Naive thymus-derived CD4-positive, alpha-beta T cell (primary cell): ENCODE measurements at regions of chr3 and their contacts with region 1.

Region 1: DNA sequence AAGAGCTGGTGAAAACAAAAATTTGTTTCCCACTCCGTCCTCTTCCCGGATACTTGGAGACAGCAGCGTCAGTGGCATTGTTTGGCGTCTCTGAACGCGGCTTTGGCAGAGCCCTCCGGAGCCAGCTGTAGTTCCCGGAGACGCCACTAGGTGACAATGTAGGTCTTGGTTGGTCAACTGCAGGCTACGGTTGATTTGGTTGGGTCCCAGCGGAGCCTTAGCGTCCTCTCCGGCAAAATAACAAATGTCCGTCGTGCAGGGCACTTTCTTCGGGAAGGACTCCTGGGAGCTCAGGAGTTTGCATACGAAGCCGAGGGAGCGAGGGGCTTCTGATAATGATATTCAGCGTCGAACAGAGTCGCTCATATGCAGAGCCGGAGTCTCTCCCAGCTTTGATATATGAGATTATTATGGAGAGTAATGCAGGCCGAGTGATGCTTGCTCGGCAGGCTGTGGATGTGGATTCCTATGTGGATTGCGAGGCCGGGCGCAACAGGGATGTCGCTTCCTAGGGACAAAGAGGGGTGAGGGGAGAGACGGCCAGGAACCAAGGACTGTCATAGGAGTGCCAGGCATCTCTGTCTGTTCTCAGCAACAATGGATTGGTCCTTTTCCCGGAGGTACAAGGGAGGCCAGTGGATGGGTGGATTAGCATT is 74.8 kb downstream of the IL20RB start:
- DNase-seq: peak; percentile 19 to 79 (median 63)
- ATAC-seq: peak; percentile 87
- H3K4me3 ChIP-seq: peak overlapping the region; percentile 55
- H3K4me3 Mint-ChIP-seq: peak overlapping the region; percentile 48 to 80 (median 74)
- H3K27ac ChIP-seq: no peak overlapping the region
- H3K27ac Mint-ChIP-seq: peak overlapping the region in 1 of 9 donors; percentile 17
- H3K4me1 ChIP-seq: no peaks in the 10 kb centered on the region
- H3K4me1 Mint-ChIP-seq: peaks cover 7 to 9% (median 8%) of the 10 kb centered on the region in 7 donors
- H3K27me3 ChIP-seq: peaks cover 0 to 7% of the 10 kb centered on the region in 2 donors
- H3K27me3 Mint-ChIP-seq: peaks cover 14 to 39% (median 33%) of the 10 kb centered on the region in 5 donors

Region 2: GRCh38 chr3:137946345-137946973 is 913.9 kb after region 1 on chr3:
- CTCF ChIA-PET with region 1: no interaction called
- POLR2A ChIA-PET with region 1: no interaction called
- intact Hi-C with region 1: loop called (anchors 1 kb)
- DNase-seq: peak in 8 of 9 donors; percentile 12 to 61 (median 52)
- ATAC-seq: peak; percentile 47
- H3K4me3 ChIP-seq: no peak overlapping the region
- H3K4me3 Mint-ChIP-seq: peak overlapping the region in 1 of 10 donors; percentile 40
- H3K27ac ChIP-seq: no peak overlapping the region
- H3K27ac Mint-ChIP-seq: peak overlapping the region in 1 of 9 donors; percentile 28
- H3K4me1 ChIP-seq: no peaks in the 10 kb centered on the region
- H3K4me1 Mint-ChIP-seq: peaks cover 0 to 7% (median 5%) of the 10 kb centered on the region in 7 donors
- H3K27me3 ChIP-seq: no peaks in the 10 kb centered on the region
- H3K27me3 Mint-ChIP-seq: peaks cover 0 to 5% (median 4%) of the 10 kb centered on the region in 5 donors

Region 3: GRCh38 chr3:137970914-137971831 is 938.6 kb after region 1 on chr3:
- CTCF ChIA-PET with region 1: interaction called, 4 read pairs
- POLR2A ChIA-PET with region 1: no interaction called
- intact Hi-C with region 1: loop called in 1 of 2 experiments (anchors 10 kb)
- DNase-seq: peak in 8 of 9 donors; percentile 6 to 61 (median 23)
- ATAC-seq: peak; percentile 47
- H3K4me3 ChIP-seq: no peak overlapping the region
- H3K4me3 Mint-ChIP-seq: no peak overlapping the region
- H3K27ac ChIP-seq: no peak overlapping the region
- H3K27ac Mint-ChIP-seq: no peak overlapping the region
- H3K4me1 ChIP-seq: no peaks in the 10 kb centered on the region
- H3K4me1 Mint-ChIP-seq: peaks cover 0 to 5% (median 3%) of the 10 kb centered on the region in 7 donors
- H3K27me3 ChIP-seq: no peaks in the 10 kb centered on the region
- H3K27me3 Mint-ChIP-seq: peaks cover 3 to 21% (median 9%) of the 10 kb centered on the region in 5 donors